ENCODE measurements at regions of chr1 and their contacts with region 1.

Region 1: GRCh38 chr1:161209790-161210409 is 5.2 kb upstream of the FCER1G start:
- DNase-seq: no peak
- H3K4me3 ChIP-seq: no peak overlapping the region
- H3K27ac ChIP-seq: no peak overlapping the region
- H3K27me3 ChIP-seq: no peaks in the 10 kb centered on the region
- CTCF ChIP-seq: peak; percentile 93

Region 2: DNA sequence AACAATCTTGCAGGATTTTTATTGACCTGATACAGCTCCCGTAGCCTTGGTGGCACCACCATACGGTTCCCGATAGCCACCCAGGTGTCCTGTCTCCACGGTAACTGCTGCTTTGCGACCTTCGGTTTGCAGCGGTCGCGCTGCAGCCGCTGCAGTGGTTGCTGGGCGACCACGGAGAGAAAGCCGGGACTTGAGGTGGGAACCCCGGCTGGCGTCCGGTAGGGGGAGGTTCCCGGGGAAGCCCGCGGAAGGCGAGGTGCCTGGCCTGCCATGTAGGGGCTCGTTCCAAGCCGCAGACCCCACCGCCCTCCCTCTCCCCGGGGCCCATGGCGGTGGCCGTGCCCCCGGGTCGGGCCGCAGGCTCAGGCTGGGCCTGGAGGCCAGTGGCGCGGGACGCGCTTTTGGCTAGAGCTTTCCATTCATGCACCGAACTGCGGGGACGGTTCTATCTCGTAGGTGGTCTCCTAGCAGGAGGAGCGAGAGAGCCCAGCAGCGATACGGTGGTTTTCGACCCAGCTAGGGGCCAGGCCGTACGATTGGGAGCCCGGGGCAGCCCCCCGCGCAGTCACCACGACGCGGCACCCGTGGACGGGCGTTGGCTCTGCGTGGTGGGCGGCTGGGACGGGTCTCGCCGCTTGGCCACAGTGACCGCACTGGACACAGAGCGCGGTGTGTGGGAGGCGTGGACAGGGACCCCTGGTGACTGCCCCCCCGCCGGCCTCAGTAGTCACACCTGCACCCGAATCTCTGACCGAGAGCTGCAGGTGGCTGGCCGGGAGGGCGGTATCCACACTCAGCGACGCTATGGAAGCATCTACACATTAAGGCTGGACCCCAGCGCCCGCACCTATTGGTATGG is 111.5 kb before region 1 on chr1 and contains the start of gene KLHDC9:
- CTCF ChIA-PET with region 1: no interaction called
- POLR2A ChIA-PET with region 1: no interaction called
- DNase-seq: no peak
- H3K4me3 ChIP-seq: peak within 1 kb of the TSS; percentile 52
- H3K27ac ChIP-seq: peak within 1 kb of the TSS; percentile 11
- H3K27me3 ChIP-seq: peaks cover 2% of the 10 kb centered on the region
- CTCF ChIP-seq: no peak; the same call in 1 of the 2 replicates
- polyA plus RNA-seq, gene KLHDC9: 1.1 and 1.6 TPM in 2 replicates

Region 3: GRCh38 chr1:161287482-161288054 is 77.7 kb after region 1 on chr1:
- CTCF ChIA-PET with region 1: interaction called, 12 read pairs
- POLR2A ChIA-PET with region 1: no interaction called
- DNase-seq: no peak
- H3K4me3 ChIP-seq: no peak overlapping the region
- H3K27ac ChIP-seq: no peak overlapping the region
- H3K27me3 ChIP-seq: peaks cover 16% of the 10 kb centered on the region
- CTCF ChIP-seq: no peak

Region 4: DNA sequence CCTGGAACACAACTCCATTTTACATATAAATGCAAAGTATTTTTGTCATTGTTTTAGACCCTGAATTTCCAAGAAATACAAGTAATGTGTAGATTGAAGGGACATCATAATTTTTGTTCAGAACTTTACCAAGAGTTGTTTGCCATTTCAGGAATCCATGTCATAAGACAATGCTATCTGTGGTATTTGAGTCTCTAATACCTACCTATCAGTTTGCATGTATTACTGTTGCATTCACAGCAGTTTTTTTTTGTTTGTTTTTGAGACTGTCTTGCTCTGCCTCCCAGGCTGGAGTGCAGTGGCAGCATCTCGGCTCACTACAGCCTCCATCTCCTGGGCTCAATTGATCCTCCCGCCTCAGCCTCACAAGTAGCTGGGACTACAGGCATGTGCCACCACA is 82.7 kb after region 1 on chr1:
- CTCF ChIA-PET with region 1: interaction called, 12 read pairs
- POLR2A ChIA-PET with region 1: no interaction called
- DNase-seq: no peak
- H3K4me3 ChIP-seq: no peak overlapping the region
- H3K27ac ChIP-seq: no peak overlapping the region
- H3K27me3 ChIP-seq: no peaks in the 10 kb centered on the region
- CTCF ChIP-seq: no peak

Region 5: GRCh38 chr1:161324020-161324419 is 114.1 kb after region 1 on chr1:
- CTCF ChIA-PET with region 1: interaction called, 11 read pairs
- POLR2A ChIA-PET with region 1: no interaction called
- DNase-seq: no peak
- H3K4me3 ChIP-seq: no peak overlapping the region
- H3K27ac ChIP-seq: no peak overlapping the region
- H3K27me3 ChIP-seq: no peaks in the 10 kb centered on the region
- CTCF ChIP-seq: no peak

Region 6: DNA sequence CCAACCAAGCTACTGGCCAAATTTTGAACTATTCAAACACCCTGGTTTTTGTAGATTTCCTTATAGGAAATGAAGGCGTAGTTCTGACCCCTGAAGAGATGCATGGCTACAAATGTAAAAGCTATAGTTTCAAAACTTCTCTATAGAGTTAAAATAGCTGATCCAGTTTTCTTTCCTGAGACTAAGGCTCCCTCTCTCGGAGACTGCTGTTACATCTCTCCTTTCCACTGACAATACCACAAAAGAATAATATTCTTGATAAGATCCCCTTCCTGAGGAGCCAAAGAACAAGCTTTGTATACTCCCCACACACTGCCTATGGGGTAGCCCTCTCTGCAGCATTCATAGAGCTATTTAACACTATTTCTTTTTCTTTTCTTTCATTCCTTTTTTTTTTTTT is 164.5 kb after region 1 on chr1:
- CTCF ChIA-PET with region 1: interaction called, 12 read pairs
- POLR2A ChIA-PET with region 1: no interaction called
- DNase-seq: no peak
- H3K4me3 ChIP-seq: no peak overlapping the region
- H3K27ac ChIP-seq: no peak overlapping the region
- H3K27me3 ChIP-seq: no peaks in the 10 kb centered on the region
- CTCF ChIP-seq: peak; percentile 34

Measured in AG04450 (cell line).